Calu3 (cell line): ENCODE measurements at regions of chr16 and their contacts with region 1.

Region 1: GRCh38 chr16:49921791-49922456 is 66.0 kb upstream of the ZNF423 start:
- DNase-seq: peak; percentile 79
- H3K4me3 Mint-ChIP-seq: no peak overlapping the region
- H3K27ac Mint-ChIP-seq: no peak overlapping the region
- H3K4me1 Mint-ChIP-seq: no peaks in the 10 kb centered on the region
- H3K27me3 Mint-ChIP-seq: peaks cover 60% of the 10 kb centered on the region
- CTCF ChIP-seq: peak; percentile 82

Region 2: DNA sequence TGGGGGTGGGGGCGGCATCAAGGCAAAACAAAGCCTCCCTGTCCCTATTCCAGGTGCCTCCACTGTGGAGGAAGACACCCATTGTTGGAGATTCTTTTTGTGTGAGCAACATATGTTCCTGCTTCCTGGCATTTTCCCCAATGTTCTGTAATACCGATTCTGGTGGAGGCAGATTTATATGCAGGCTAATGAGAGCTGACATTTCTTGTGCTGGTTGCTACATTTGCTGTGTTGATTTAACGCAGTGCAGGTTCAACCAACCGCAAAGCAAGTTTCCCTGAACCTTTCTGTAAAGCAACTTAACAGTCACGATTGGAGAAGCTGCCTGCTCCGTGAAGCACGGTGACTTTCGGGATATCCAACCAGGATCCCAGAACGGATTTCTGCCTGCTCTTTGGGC is 900.8 kb before region 1 on chr16:
- CTCF ChIA-PET with region 1: no interaction called
- intact Hi-C with region 1: no loop called
- DNase-seq: no peak
- H3K4me3 Mint-ChIP-seq: no peak overlapping the region
- H3K27ac Mint-ChIP-seq: no peak overlapping the region
- H3K4me1 Mint-ChIP-seq: no peaks in the 10 kb centered on the region
- H3K27me3 Mint-ChIP-seq: peaks cover 60% of the 10 kb centered on the region
- CTCF ChIP-seq: no peak

Region 3: DNA sequence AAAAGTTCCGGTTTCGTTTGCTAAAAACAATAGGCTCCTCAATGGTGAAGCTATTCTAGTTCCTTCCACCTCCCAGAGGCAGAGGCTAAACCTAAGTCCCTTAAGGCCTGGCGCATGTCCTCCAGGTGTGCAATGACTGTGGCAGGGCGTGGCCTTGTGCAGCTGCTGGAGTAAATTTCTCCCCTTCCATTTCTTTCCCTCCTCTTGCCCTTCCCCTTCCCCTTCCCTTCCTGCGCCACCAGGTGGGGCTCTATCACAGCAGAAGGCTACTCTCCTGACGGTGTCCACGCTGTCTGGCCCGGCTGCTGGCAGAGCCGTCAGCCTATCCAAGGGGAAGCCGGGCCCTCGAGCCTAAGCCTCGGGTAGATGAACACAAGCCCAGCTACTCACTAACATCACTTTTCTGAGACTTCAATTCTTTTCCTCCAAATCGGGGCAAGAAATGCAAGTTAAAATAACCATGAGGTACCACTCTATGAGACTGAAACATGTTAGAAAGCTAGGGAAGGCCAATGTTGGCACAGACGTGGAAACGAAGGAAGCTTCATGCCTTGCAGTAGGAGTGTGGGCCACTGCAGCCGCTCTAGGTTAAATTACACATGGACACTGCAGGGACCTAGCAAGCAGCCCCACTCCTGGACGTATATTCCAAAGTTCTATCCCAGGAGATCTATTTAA is 513.9 kb before region 1 on chr16:
- CTCF ChIA-PET with region 1: interaction called, 3 read pairs
- intact Hi-C with region 1: loop called (anchors 1 kb)
- DNase-seq: peak; percentile 88
- H3K4me3 Mint-ChIP-seq: no peak overlapping the region
- H3K27ac Mint-ChIP-seq: no peak overlapping the region
- H3K4me1 Mint-ChIP-seq: no peaks in the 10 kb centered on the region
- H3K27me3 Mint-ChIP-seq: peaks cover 39% of the 10 kb centered on the region
- CTCF ChIP-seq: peak; percentile 85

Region 4: DNA sequence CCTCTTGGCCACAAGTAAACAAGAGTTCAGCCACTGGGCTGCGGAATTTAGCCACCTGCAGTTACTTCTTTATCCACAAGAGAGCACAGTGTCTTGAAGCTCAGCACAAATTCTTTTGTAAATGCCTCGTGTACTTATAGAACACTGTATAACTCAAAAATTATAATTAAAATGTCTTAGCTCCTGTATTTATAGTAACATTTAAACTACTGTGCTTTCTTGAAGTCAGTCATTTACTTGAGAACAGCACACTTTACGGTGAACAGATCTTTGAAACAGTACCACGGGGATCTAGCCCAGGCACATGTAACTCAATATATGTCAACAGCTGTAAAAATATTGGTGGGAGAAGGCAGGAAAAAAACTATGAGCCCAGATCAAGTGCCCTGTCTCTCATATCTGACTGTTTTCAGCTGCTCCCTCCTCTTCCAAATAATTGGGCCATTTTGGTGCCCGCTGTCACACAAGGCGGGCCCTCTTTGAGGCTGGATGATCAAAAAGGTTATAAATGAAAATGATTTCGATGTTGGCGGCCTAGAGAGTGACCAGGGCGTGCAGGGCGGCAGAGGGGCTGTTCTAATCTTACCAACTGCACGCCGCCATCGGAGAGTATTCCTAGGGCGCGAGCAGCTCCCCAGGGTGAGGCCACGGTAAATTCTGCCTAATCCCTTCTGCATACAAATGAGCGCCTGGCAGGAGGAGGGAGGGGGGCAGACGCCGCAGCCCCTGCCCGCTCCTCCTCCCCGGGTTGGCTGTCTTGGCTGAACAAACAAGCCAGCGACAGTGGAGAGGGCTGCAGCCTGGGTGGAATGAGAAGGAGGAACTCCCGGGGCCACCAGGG is 365.1 kb before region 1 on chr16:
- CTCF ChIA-PET with region 1: interaction called, 5 read pairs
- intact Hi-C with region 1: loop called (anchors 1 kb)
- DNase-seq: no peak
- H3K4me3 Mint-ChIP-seq: no peak overlapping the region
- H3K27ac Mint-ChIP-seq: no peak overlapping the region
- H3K4me1 Mint-ChIP-seq: no peaks in the 10 kb centered on the region
- H3K27me3 Mint-ChIP-seq: peaks cover 16% of the 10 kb centered on the region
- CTCF ChIP-seq: peak; percentile 30

Region 5: DNA sequence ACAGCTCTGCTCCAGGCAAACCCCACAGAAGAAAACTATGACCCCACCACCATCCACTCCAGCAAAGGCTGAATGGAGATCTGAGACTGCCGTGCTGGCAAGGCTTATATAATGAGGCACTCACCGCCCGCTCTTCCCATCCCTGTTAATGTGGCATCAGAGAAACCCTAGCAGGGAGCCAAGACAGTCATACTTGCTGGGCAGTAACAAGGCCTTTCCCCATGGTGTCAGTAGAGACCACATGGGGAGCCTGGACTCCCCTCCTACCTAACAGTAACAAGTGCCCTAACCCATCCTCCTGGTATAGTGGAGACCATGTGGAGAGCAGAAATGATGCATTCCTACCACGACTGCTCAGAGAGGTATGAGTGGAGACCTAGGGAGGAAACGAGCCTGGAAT is 313.1 kb before region 1 on chr16:
- CTCF ChIA-PET with region 1: no interaction called
- intact Hi-C with region 1: loop called (anchors 5 kb)
- DNase-seq: no peak
- H3K4me3 Mint-ChIP-seq: no peak overlapping the region
- H3K27ac Mint-ChIP-seq: no peak overlapping the region
- H3K4me1 Mint-ChIP-seq: no peaks in the 10 kb centered on the region
- H3K27me3 Mint-ChIP-seq: peaks cover 83% of the 10 kb centered on the region
- CTCF ChIP-seq: no peak

Region 6: DNA sequence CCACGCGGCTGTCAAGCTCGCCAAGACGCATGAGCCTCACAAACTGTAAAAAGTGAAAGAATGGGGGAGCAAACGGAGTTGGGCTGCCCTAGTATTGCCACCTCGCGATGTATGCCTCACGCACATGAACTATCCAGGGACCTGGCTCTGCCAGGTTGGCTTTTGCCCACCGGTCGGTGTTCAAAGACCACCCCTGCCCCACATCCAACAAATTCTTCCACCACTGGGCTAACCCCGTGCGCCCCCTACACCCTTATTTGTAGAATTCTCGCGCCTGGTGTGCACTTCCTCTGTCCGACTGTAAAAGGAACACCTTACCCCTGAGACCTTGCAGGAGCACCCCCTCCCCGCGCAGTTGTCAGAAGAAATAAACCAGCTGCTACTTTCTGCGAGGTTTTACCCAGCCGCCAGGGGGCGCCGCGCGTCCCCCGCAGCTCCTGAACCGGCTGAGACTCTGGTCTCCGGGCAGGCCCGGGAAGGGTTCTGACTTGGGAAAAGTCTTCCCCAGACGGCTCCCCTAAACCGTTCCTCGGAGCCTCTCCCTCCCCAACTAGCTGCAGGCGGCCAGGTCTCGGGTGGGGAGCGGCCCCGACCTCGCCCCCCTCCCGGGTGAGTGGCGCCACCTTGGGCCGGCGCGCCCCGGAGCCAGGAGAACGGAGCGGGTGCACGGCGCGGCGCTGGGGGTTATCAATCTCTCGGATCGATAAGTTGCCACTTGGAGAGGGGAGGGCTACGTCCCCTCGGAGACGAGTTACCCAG is 64.3 kb before region 1 on chr16:
- CTCF ChIA-PET with region 1: interaction called, 5 read pairs
- intact Hi-C with region 1: loop called (anchors 1 kb)
- DNase-seq: peak; percentile 77
- H3K4me3 Mint-ChIP-seq: peak overlapping the region; percentile 72
- H3K27ac Mint-ChIP-seq: no peak overlapping the region
- H3K4me1 Mint-ChIP-seq: peaks cover 8% of the 10 kb centered on the region
- H3K27me3 Mint-ChIP-seq: peaks cover 94% of the 10 kb centered on the region
- CTCF ChIP-seq: peak; percentile 97